H1 (cell line): ENCODE measurements at regions of chr1 and their contacts with region 1.

Region 1: DNA sequence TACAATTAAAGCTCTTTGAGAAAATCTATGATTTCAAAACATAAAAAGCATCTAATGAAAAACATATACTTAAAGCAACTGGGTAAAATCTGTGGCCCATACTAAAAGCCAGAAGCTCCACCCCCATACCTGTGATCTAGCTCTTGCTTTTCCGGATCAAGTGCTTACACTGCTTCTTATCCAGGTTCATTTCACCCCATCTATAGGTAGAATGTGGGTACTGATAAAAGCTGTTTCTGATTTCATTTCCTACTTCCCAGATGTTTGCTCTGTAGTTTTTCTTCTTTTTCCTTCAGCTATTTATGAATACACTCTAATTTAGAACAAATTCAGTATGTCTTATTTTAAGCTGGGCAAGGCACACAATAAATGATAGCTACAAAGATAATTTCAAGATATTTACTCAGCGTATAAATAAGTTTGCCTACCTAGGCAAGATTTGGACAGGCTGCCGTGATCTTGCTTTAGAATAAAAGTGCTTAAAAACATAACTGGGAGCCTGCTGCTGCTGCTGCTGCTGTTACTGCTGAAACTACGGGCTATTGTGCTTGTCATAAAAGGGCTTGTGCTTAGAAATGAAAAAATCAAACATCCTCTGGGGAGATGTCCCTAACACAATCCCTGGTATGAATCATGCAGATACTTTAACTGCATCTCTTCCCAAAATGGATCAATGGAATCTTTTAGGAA is 2.1 kb downstream of the SIPA1L2 start:
- DNase-seq: no peak
- H3K4me3 ChIP-seq: no peak overlapping the region
- H3K27ac ChIP-seq: no peak overlapping the region
- H3K4me1 ChIP-seq: peaks cover 0 to 7% (median 5%) of the 10 kb centered on the region in 4 experiments
- H3K27me3 ChIP-seq: peaks cover 5 to 29% (median 14%) of the 10 kb centered on the region in 4 experiments; a peak in 6 of 7 replicates
- CTCF ChIP-seq: peak in 2 of 3 experiments; percentile 37 to 62; a peak in 2 of 4 replicates
- EP300 ChIP-seq: no peak
- POLR2A ChIP-seq: no peak
- RAD21 ChIP-seq: peak; percentile 75 to 82

Region 2: GRCh38 chr1:232519186-232519585 is 108.6 kb before region 1 on chr1:
- CTCF ChIA-PET with region 1: interaction called, 11 read pairs
- POLR2A ChIA-PET with region 1: no interaction called
- DNase-seq: no peak
- H3K4me3 ChIP-seq: no peak overlapping the region
- H3K27ac ChIP-seq: no peak overlapping the region
- H3K4me1 ChIP-seq: peaks cover 0 to 2% (median 0%) of the 10 kb centered on the region in 4 experiments; a peak in 1 of 7 replicates
- H3K27me3 ChIP-seq: no peaks in the 10 kb centered on the region
- CTCF ChIP-seq: no peak
- EP300 ChIP-seq: no peak
- POLR2A ChIP-seq: no peak
- RAD21 ChIP-seq: no peak

Region 3: DNA sequence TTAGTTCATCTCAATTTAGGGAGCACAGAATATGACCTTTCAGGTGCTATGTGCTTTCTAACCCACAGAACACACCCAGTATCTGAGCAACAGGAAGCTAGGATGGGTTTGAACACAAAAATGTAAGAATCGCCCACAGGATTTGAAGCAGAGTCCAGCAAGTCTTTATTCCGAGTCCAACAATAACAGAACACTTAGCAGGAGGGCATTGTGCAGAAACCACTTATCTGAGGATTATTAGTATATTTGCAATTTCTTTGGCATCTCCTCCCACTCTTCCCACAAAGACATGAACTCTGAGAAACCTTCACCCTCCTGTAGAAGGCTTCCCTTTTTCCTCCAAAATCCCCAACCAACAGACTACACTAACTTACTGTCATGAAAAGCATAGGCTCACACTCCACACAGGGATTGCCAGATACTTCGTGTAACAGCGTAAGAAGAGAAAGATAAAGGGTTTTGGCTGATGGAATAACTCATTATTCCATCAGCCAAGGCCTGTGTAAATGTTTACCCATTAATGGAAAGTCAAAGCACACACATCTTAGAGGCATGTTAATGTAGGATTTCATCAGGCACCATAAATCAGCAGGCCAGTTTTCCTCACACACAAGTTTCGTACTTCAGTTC is 13.9 kb before region 1 on chr1:
- CTCF ChIA-PET with region 1: interaction called, 47 read pairs
- POLR2A ChIA-PET with region 1: interaction called, 3 read pairs
- DNase-seq: no peak
- H3K4me3 ChIP-seq: no peak overlapping the region
- H3K27ac ChIP-seq: no peak overlapping the region
- H3K4me1 ChIP-seq: peaks cover 0 to 5% (median under 1%) of the 10 kb centered on the region in 4 experiments; a peak in 4 of 7 replicates
- H3K27me3 ChIP-seq: no peaks in the 10 kb centered on the region
- CTCF ChIP-seq: no peak
- EP300 ChIP-seq: no peak
- POLR2A ChIP-seq: no peak
- RAD21 ChIP-seq: no peak

Region 4: DNA sequence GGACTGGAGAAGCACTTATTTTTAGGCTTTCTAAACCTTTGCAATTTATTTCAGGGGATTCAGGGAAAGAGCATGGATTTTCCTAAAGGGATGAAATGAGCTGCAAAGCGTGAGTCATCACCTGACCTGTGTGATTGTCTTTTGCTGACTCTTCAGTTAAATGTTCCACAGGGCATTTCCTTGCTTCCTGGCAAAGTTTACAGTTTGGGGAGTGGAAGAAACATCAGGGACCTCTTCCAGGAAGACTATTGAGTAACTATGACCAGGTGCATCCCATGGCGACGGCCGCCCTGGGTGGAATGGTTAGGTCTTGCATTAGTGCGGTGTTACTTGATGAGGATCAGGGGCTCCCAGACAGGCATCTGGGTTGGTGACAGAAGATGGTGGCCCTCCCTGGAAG is 81.6 kb after region 1 on chr1:
- CTCF ChIA-PET with region 1: no interaction called
- POLR2A ChIA-PET with region 1: no interaction called
- DNase-seq: no peak
- H3K4me3 ChIP-seq: no peak overlapping the region
- H3K27ac ChIP-seq: no peak overlapping the region
- H3K4me1 ChIP-seq: no peaks in the 10 kb centered on the region
- H3K27me3 ChIP-seq: no peaks in the 10 kb centered on the region
- CTCF ChIP-seq: no peak
- EP300 ChIP-seq: no peak
- POLR2A ChIP-seq: no peak
- RAD21 ChIP-seq: no peak